CD4-positive, alpha-beta memory T cell (primary cell): ENCODE measurements at regions of chr6 and their contacts with region 1.

Region 1: DNA sequence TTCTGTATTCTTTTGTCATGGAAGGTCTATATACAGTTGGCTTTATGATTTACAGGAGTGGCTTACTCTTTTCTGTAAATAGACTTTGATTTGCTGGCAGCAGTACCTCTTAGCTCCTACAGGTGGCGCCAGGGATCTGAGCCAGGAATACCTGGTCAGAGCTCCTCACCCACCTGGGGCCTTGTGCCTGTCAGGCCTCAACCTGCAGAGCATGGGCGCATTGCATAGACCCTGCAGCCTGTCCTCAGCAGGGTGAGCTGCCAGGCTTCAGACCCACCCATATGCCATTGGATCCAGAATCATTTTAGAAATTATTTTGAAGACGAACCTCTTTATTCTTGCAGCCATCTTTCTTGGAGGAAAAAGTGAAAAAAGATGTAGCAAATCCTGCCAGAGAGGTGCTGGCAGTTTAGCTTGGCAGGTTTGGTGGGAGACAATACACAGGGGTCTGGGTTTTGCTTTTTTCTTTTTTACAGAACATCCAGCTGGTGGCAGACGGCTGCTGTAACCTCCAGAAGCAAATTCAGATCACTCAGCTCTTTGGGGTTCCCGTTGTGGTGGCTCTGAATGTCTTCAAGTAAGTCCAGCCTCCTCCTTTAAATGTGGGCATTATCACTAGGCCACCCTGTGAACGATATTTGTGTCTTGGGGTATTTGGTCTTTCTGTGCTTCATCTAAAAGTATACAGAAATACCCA is 149.1 kb downstream of the MTHFD1L start:
- DNase-seq: peak in 4 of 5 donors; percentile 50 to 56 (median 52)
- H3K4me3 ChIP-seq: no peak overlapping the region
- H3K4me3 Mint-ChIP-seq: peak overlapping the region in 5 of 8 donors; percentile 2 to 62 (median 50)
- H3K27ac ChIP-seq: no peak overlapping the region
- H3K27ac Mint-ChIP-seq: peak overlapping the region in 4 of 7 donors; percentile 6 to 87 (median 58)
- H3K4me1 ChIP-seq: peaks cover 4% of the 10 kb centered on the region
- H3K4me1 Mint-ChIP-seq: peaks cover 3 to 7% (median 4%) of the 10 kb centered on the region in 4 donors
- H3K27me3 ChIP-seq: no peaks in the 10 kb centered on the region
- H3K27me3 Mint-ChIP-seq: no peaks in the 10 kb centered on the region

Region 2: GRCh38 chr6:150891888-150892485 is 122.6 kb before region 1 on chr6:
- CTCF ChIA-PET with region 1: interaction called, 39 read pairs
- POLR2A ChIA-PET with region 1: no interaction called
- intact Hi-C with region 1: no loop called
- DNase-seq: peak; percentile 50 to 59 (median 50)
- H3K4me3 ChIP-seq: no peak overlapping the region
- H3K4me3 Mint-ChIP-seq: no peak overlapping the region
- H3K27ac ChIP-seq: no peak overlapping the region
- H3K27ac Mint-ChIP-seq: peak overlapping the region in 1 of 7 donors; percentile 1
- H3K4me1 ChIP-seq: peaks cover 17% of the 10 kb centered on the region
- H3K4me1 Mint-ChIP-seq: peaks cover 8 to 21% (median 19%) of the 10 kb centered on the region in 4 donors
- H3K27me3 ChIP-seq: no peaks in the 10 kb centered on the region
- H3K27me3 Mint-ChIP-seq: no peaks in the 10 kb centered on the region

Region 3: DNA sequence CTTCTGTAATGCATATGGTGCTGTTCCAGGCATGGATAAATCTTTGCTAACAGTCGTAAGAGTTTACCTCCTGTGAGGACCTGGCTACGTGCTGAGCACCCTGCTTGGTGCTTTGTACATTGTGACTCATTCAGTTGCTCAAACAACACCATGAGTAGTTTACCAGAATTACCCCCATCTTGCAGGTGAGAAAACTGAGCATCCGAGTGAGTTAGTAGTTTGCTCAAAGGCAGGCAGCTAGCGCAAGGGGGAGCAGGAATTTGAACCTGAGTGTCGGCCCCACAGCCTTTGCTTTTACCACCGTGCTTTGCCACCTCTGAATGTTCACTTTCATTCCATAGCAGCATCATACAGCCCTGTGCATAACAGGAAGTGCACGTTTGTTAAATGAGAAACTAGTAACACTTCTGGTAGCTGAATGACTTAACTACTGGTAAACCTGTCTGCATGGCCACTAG is 27.2 kb before region 1 on chr6:
- CTCF ChIA-PET with region 1: interaction called, 30 read pairs
- POLR2A ChIA-PET with region 1: interaction called, 5 read pairs
- intact Hi-C with region 1: no loop called
- DNase-seq: peak in 4 of 5 donors; percentile 15 to 36 (median 24)
- H3K4me3 ChIP-seq: no peak overlapping the region
- H3K4me3 Mint-ChIP-seq: peak overlapping the region; percentile 71 to 84 (median 82)
- H3K27ac ChIP-seq: no peak overlapping the region
- H3K27ac Mint-ChIP-seq: peak overlapping the region in 6 of 7 donors; percentile 51 to 93 (median 86)
- H3K4me1 ChIP-seq: peaks cover 10% of the 10 kb centered on the region
- H3K4me1 Mint-ChIP-seq: peaks cover 5 to 8% (median 7%) of the 10 kb centered on the region in 4 donors
- H3K27me3 ChIP-seq: no peaks in the 10 kb centered on the region
- H3K27me3 Mint-ChIP-seq: no peaks in the 10 kb centered on the region

Region 4: GRCh38 chr6:151004415-151005024 is 10.0 kb before region 1 on chr6:
- CTCF ChIA-PET with region 1: interaction called, 70 read pairs
- POLR2A ChIA-PET with region 1: interaction called, 7 read pairs
- intact Hi-C with region 1: no loop called
- DNase-seq: no peak
- H3K4me3 ChIP-seq: no peak overlapping the region
- H3K4me3 Mint-ChIP-seq: peak overlapping the region in 1 of 8 donors; percentile 19
- H3K27ac ChIP-seq: no peak overlapping the region
- H3K27ac Mint-ChIP-seq: peak overlapping the region in 2 of 7 donors; percentile 27 to 67
- H3K4me1 ChIP-seq: peaks cover 5% of the 10 kb centered on the region
- H3K4me1 Mint-ChIP-seq: peaks cover 4 to 30% (median 9%) of the 10 kb centered on the region in 4 donors
- H3K27me3 ChIP-seq: no peaks in the 10 kb centered on the region
- H3K27me3 Mint-ChIP-seq: no peaks in the 10 kb centered on the region

Region 5: GRCh38 chr6:151029970-151030369 is 15.4 kb after region 1 on chr6:
- CTCF ChIA-PET with region 1: interaction called, 29 read pairs
- POLR2A ChIA-PET with region 1: no interaction called
- intact Hi-C with region 1: no loop called
- DNase-seq: no peak
- H3K4me3 ChIP-seq: no peak overlapping the region
- H3K4me3 Mint-ChIP-seq: no peak overlapping the region
- H3K27ac ChIP-seq: no peak overlapping the region
- H3K27ac Mint-ChIP-seq: no peak overlapping the region
- H3K4me1 ChIP-seq: no peaks in the 10 kb centered on the region
- H3K4me1 Mint-ChIP-seq: no peaks in the 10 kb centered on the region
- H3K27me3 ChIP-seq: no peaks in the 10 kb centered on the region
- H3K27me3 Mint-ChIP-seq: no peaks in the 10 kb centered on the region

Region 6: DNA sequence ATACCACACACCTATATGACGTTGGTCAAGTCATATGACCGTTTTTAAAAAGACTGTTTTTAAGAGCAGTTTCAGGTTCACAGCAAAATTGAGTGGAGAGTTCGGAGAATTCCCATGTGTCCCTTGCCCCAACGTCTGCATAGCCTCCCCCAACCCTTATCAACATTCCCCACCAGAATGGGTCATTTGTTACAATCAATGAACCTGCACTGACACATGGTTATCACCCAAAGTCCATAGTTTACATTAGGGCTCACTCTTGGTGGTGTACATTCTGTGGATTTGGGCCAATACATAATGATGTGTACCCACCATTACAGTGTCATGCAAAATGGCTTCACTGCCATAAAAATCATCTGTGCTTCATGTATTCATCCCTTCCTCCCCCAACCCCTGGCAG is 324.8 kb after region 1 on chr6:
- CTCF ChIA-PET with region 1: interaction called, 48 read pairs
- POLR2A ChIA-PET with region 1: no interaction called
- intact Hi-C with region 1: no loop called
- DNase-seq: no peak
- H3K4me3 ChIP-seq: no peak overlapping the region
- H3K4me3 Mint-ChIP-seq: no peak overlapping the region
- H3K27ac ChIP-seq: no peak overlapping the region
- H3K27ac Mint-ChIP-seq: no peak overlapping the region
- H3K4me1 ChIP-seq: no peaks in the 10 kb centered on the region
- H3K4me1 Mint-ChIP-seq: peaks cover 0 to 4% (median 3%) of the 10 kb centered on the region in 4 donors
- H3K27me3 ChIP-seq: no peaks in the 10 kb centered on the region
- H3K27me3 Mint-ChIP-seq: peaks cover 3 to 4% of the 10 kb centered on the region in 2 donors

Region 7: DNA sequence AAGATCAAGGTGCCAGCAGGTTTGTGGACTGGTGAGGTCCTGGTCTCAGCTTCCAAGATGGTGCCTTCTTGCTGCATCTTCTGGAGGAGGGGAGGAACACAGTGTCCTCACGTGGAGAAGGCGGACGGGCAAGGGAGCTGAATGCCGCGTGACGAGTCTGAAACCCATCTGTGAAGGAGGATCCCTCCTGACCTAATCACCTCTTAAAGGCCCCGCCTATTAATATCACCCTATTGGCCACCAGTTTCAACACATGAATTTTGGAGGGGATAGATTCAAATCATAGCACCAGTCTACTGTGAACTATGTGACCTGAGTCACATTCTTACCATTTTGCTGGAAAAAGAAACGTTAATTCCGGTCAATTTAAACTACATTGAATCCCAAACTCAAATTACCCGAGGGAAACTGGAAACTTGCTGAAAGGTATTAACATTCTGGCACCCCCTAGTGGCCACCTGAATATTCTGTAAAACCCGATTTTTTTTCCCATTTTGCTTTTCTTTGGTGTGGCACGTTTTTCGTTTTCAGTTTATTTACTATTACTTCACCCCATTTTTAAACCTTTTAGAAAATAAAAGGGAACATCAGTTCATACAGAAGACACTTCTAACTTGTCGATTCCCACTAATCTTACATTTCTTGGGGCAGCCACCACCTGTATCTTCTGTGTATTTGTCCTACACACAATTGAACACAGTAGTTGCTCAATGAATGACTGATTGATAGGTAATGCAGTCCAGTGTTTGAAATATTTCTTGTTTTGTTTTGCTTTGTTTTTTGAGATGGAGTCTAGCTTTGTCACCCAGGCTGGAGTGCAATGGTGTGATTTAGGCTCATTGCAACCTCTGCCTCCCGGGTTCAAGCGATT is 461.3 kb after region 1 on chr6:
- CTCF ChIA-PET with region 1: interaction called, 6 read pairs
- POLR2A ChIA-PET with region 1: no interaction called
- intact Hi-C with region 1: loop called (anchors 2 kb)
- DNase-seq: peak; percentile 41 to 57 (median 52)
- H3K4me3 ChIP-seq: no peak overlapping the region
- H3K4me3 Mint-ChIP-seq: peak overlapping the region in 5 of 8 donors; percentile 2 to 53 (median 20)
- H3K27ac ChIP-seq: no peak overlapping the region
- H3K27ac Mint-ChIP-seq: peak overlapping the region in 1 of 7 donors; percentile 42
- H3K4me1 ChIP-seq: peaks cover 9% of the 10 kb centered on the region
- H3K4me1 Mint-ChIP-seq: peaks cover 7 to 8% (median 8%) of the 10 kb centered on the region in 4 donors
- H3K27me3 ChIP-seq: no peaks in the 10 kb centered on the region
- H3K27me3 Mint-ChIP-seq: no peaks in the 10 kb centered on the region